ENCODE measurements at regions of chr3 and their contacts with region 1.

Region 1: DNA sequence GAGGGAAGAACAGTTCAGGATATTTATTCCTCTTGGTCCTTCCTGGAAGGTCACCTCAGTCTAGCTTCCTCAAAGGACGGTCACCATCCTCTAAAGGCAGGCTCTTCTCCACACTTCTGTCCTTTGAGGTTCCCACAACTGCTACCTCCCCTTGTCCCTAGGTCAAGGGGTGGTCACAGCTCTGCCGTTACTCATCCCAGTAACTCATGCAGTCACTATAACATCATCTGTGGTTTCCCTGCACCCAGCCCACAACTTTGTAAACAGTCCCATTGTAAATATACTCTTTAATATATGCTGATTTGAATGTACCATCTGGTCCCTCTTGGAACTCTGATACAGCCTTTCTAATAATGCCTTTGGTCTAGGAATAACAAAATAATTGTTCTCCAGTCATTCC is 887.4 kb downstream of the FHIT start:
- DNase-seq: peak; percentile 23
- H3K4me3 ChIP-seq: no peak overlapping the region
- H3K27ac ChIP-seq: no peak overlapping the region
- H3K27me3 ChIP-seq: no peaks in the 10 kb centered on the region
- CTCF ChIP-seq: no peak

Region 2: GRCh38 chr3:60086811-60087210 is 277.0 kb before region 1 on chr3:
- CTCF ChIA-PET with region 1: no interaction called
- POLR2A ChIA-PET with region 1: no interaction called
- DNase-seq: no peak
- H3K4me3 ChIP-seq: no peak overlapping the region
- H3K27ac ChIP-seq: peak overlapping the region; percentile 4
- H3K27me3 ChIP-seq: no peaks in the 10 kb centered on the region
- CTCF ChIP-seq: no peak

Region 3: DNA sequence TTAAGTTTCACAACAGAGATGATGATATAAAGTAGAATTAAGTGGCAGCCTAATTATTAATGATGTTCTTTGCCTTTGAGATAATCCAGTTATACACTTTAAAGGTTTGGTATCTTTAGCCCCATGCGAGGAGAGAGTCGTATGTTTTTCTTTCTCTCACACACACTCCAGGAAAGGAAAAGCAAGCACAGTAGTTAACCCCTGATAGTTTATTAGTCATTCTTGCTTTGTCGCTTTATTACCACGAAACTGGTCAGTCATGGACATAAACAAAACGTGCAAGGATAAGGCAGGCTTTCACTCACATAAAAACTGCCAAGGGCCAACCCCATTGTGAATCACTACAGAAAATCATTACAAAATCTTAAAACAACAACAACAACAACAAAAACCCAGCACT is 20.5 kb after region 1 on chr3:
- CTCF ChIA-PET with region 1: interaction called, 10 read pairs
- POLR2A ChIA-PET with region 1: no interaction called
- DNase-seq: no peak
- H3K4me3 ChIP-seq: no peak overlapping the region
- H3K27ac ChIP-seq: no peak overlapping the region
- H3K27me3 ChIP-seq: no peaks in the 10 kb centered on the region
- CTCF ChIP-seq: no peak

Measured in AG04450 (cell line).